ENCODE measurements at regions of chr21 and their contacts with region 1.

Region 1: DNA sequence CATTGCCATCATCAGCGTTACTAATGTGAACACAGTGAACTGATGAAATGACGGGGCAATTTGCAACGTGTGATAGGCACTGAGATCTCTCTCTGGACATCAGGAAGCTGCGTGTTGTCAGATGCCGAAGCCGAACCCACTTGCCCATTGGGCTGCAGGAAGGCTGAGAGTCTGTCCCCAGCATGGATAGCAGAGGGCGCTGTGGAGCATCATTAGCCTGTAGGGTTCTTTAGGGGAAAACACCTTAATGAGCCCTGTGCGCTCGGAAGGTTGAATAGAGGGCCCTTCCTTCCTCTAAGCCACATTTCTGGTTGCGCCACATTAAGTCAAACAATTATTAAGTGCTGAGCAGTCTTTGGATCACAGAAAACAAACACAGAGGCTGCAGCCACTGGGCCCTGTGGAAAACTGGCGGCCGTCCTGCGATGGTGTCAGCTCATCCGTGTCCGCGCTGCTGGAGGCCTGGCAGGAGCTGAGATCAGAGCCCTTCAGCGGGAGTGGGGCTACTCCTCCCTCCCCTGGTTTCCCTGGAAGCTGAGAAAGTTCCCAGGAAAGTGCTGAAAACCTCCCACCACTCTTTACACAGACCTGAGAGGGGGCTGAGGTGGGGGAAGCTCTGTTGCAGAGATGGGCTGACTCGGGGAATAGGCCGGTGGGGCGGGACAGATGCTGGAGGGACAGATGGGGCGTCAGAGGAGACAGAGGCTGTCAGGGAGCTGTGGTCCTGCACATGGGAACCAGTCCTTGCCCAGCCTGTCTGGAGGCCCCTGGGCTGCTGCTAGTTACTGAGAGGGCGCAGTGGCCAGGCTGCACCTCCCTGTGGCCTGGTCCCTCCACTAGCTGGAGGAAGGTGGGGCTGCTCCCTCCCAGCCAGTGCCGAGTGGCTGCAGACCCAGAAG is 12.7 kb downstream of the TFF2 start:
- DNase-seq: peak; percentile 66
- H3K4me3 Mint-ChIP-seq: no peak overlapping the region
- H3K27ac Mint-ChIP-seq: peak overlapping the region; percentile 15
- H3K4me1 Mint-ChIP-seq: peaks cover 12% of the 10 kb centered on the region
- H3K27me3 Mint-ChIP-seq: peaks cover 28% of the 10 kb centered on the region

Region 2: DNA sequence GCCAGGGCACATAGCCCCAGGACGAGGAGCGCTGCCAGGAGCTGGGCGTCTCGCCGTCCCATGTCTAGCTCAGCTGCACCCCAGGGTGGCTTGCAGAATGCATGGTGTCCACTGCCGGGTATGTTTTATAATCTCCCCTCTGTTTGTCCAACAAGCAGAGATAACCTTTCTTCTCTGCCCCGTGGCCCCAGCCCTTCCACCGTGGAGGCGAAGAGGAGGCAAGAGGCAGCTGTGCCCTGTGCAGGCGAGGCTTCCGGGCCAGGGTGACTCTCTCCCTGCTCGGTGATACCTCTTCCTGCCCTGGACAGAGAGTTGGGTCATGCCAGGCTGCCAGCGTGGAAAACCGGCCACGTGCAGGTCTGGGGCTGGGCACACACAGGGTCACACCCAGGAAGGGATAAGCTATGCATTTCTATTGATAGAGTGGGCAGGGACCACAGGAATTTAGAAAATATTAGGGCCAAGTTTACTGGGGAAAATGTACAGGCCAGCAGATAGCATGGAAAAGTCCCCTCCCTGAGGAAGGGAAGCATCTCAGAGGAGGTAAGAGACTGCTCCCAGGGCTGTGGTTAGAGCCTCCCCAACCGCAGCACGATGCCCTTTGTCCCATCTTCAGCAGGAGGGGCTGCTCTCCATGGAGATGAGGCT is 12.9 kb after region 1 on chr21 and contains the start of gene TFF2:
- intact Hi-C with region 1: no loop called
- DNase-seq: no peak
- H3K4me3 Mint-ChIP-seq: no peak within 1 kb of the TSS
- H3K27ac Mint-ChIP-seq: no peak within 1 kb of the TSS
- H3K4me1 Mint-ChIP-seq: no peaks in the 10 kb centered on the region
- H3K27me3 Mint-ChIP-seq: peaks cover 2% of the 10 kb centered on the region
- total RNA-seq, gene TFF2: not detected in 2 replicates

Region 3: GRCh38 chr21:42376338-42376982 is 38.4 kb after region 1 on chr21:
- intact Hi-C with region 1: no loop called
- DNase-seq: no peak
- H3K4me3 Mint-ChIP-seq: no peak overlapping the region
- H3K27ac Mint-ChIP-seq: no peak overlapping the region
- H3K4me1 Mint-ChIP-seq: peaks cover 17% of the 10 kb centered on the region
- H3K27me3 Mint-ChIP-seq: no peaks in the 10 kb centered on the region

Region 4: GRCh38 chr21:42406201-42406621 is 68.1 kb after region 1 on chr21:
- intact Hi-C with region 1: loop called (anchors 5 kb)
- DNase-seq: peak; percentile 59
- H3K4me3 Mint-ChIP-seq: peak overlapping the region; percentile 92
- H3K27ac Mint-ChIP-seq: peak overlapping the region; percentile 94
- H3K4me1 Mint-ChIP-seq: peaks cover 58% of the 10 kb centered on the region
- H3K27me3 Mint-ChIP-seq: no peaks in the 10 kb centered on the region

Measured in activated T-helper 1 cell treated with anti-CD3 and anti-CD28 coated beads, Interleukin-12 subunit alpha, Interleukin-12 subunit beta, Interleukin-2, Interleukin-4 antibody, amounts not matched to agents 30 ng/mL and 10 ng/mL and 1 ng/mL, durations not matched to agents 14 hours and 24 hours and 36 hours (primary cell).